IMR-90 (cell line): ENCODE measurements at regions of chr4 and their contacts with region 1.

Region 1: DNA sequence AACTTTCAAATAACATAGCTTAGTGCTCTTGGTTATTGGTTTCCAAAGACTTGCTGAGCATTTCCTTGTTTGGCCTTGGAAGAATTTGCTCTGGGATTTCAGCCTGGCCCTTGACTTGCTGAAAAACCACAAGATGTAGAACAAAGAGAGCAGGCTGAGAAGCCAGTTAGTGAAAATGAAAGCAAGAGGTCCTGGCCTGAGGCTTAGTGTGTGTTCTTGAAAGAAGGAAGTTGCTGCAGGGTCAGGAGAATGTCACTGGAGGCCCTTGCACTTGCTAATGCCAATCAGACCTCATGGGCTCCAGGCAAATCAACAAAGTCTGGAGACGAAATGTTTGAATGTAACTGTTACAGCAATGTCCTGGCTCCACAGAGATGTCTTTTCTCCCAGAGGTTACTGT is 79.4 kb downstream of the SYNPO2 start:
- DNase-seq: peak; percentile 87
- ATAC-seq: peak; percentile 75
- H3K4me3 ChIP-seq: no peak overlapping the region
- H3K27ac ChIP-seq: peak overlapping the region; percentile 90
- H3K4me1 ChIP-seq: peaks cover 16% of the 10 kb centered on the region
- H3K27me3 ChIP-seq: no peaks in the 10 kb centered on the region
- CTCF ChIP-seq: no peak
- POLR2A ChIP-seq: no peak
- RAD21 ChIP-seq: no peak

Region 2: DNA sequence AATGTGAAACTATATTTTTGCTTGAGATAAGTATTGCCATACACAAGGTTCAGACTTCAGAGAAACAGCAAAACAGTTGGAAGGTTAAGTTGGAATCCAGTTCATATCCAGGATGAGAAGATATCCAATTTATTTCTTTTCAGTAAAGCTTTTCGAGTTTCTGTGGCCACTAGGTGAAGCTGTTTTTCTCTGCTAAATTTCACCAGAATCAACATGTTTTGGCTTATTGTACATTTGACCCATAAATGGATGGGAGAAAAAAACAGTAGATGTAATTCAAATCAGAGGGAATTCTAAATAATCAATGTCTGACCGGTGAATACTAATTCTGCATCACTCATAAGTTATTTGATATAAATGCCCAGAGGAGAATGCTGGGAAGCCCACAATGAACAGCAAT is 291.9 kb before region 1 on chr4:
- CTCF ChIA-PET with region 1: no interaction called
- POLR2A ChIA-PET with region 1: no interaction called
- dilution Hi-C with region 1: no loop called
- in situ Hi-C with region 1: no loop called
- intact Hi-C with region 1: loop called (anchors 5 kb)
- DNase-seq: no peak
- ATAC-seq: no peak
- H3K4me3 ChIP-seq: no peak overlapping the region
- H3K27ac ChIP-seq: no peak overlapping the region
- H3K4me1 ChIP-seq: no peaks in the 10 kb centered on the region
- H3K27me3 ChIP-seq: no peaks in the 10 kb centered on the region; the same call in none of the 2 replicates
- CTCF ChIP-seq: 0 out of 2 replicates have a peak, but pooled peaks have one; percentile 15
- POLR2A ChIP-seq: no peak
- RAD21 ChIP-seq: no peak

Region 3: DNA sequence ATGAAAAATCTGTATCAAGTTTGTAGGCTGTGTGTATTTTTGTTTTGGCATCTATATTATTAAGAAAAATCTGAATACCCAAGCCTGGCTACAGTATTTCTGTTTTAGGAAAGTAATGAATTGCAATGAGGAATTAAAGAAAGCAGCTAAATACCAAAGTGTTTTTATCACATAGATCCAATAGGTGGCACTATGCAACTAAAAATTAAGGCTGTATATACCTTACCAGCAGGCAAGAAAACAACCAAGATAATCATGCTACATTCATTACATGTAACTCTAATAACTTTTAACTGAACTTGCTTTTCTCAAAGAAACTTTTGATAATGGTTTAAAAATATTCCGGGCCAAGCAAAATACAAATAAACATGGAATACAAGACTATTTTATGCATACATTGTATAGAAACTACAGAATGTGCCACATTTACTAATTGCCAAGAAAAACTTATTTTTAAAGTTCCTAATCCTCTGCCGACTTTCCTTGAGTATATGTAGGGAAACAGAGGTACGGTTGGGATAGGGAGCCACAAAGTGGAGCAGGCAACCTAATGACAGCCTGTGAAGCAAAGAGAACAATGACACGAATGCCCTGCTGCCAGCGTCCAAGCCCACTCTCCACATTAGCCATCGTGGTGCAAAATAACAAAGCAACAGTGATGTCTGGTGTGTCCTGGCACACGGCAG is 195.8 kb before region 1 on chr4:
- CTCF ChIA-PET with region 1: interaction called, 3 read pairs
- POLR2A ChIA-PET with region 1: no interaction called
- dilution Hi-C with region 1: no loop called
- in situ Hi-C with region 1: no loop called
- intact Hi-C with region 1: loop called (anchors 1 kb)
- DNase-seq: peak; percentile 70
- ATAC-seq: peak; percentile 60
- H3K4me3 ChIP-seq: no peak overlapping the region
- H3K27ac ChIP-seq: peak overlapping the region; percentile 50; the same call in 1 of the 2 replicates
- H3K4me1 ChIP-seq: peaks cover 12% of the 10 kb centered on the region
- H3K27me3 ChIP-seq: no peaks in the 10 kb centered on the region
- CTCF ChIP-seq: peak; percentile 61
- POLR2A ChIP-seq: no peak
- RAD21 ChIP-seq: peak; percentile 62

Region 4: GRCh38 chr4:118888666-118889311 is 79.2 kb before region 1 on chr4 and contains the start of gene SYNPO2:
- CTCF ChIA-PET with region 1: no interaction called
- POLR2A ChIA-PET with region 1: interaction called, 3 read pairs
- dilution Hi-C with region 1: no loop called
- in situ Hi-C with region 1: no loop called
- intact Hi-C with region 1: loop called (anchors 1 kb)
- DNase-seq: peak; percentile 87
- ATAC-seq: peak; percentile 95
- H3K4me3 ChIP-seq: peak within 1 kb of the TSS; percentile 52
- H3K27ac ChIP-seq: peak within 1 kb of the TSS; percentile 31; the same call in 1 of the 2 replicates
- H3K4me1 ChIP-seq: peaks cover 5% of the 10 kb centered on the region
- H3K27me3 ChIP-seq: no peaks in the 10 kb centered on the region
- CTCF ChIP-seq: no peak
- POLR2A ChIP-seq: peak; percentile 52; the same call in 1 of the 2 replicates
- RAD21 ChIP-seq: peak; percentile 29
- total RNA-seq, gene SYNPO2: 1.7 and 1.8 TPM in 2 replicates

Region 5: DNA sequence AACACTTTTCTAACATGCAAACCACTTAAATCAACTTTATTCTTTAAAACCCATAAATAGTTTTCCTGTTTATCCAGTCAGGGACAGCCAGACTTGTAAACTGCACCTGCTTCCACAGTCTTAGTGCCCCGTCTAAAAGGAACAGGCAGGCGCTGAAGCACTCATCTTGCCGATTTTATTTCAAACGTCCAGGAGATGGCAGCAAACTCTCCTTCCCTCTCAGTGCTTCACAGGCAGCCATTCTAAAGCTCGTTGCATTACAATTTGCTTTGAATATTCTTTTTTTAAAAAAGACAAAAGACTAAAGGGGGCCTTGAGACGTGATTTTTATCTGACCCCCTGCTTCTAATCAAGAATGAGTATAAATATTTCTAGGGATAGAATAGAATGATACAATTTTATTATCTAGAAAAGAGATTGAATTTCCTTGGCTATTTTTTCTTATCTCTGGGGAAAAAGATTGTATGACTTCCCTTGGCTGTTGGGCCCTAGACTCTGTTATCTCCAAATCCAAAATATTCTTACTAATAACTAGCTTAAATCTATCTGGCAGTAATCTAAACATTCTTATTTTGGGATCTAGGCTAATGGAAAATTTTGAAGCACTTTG is 74.1 kb after region 1 on chr4:
- CTCF ChIA-PET with region 1: no interaction called
- POLR2A ChIA-PET with region 1: no interaction called
- dilution Hi-C with region 1: no loop called
- in situ Hi-C with region 1: no loop called
- intact Hi-C with region 1: no loop called
- DNase-seq: peak; percentile 83
- ATAC-seq: peak; percentile 63
- H3K4me3 ChIP-seq: no peak overlapping the region
- H3K27ac ChIP-seq: peak overlapping the region; percentile 100; the same call in 1 of the 2 replicates
- H3K4me1 ChIP-seq: peaks cover 12% of the 10 kb centered on the region
- H3K27me3 ChIP-seq: no peaks in the 10 kb centered on the region
- CTCF ChIP-seq: peak; percentile 77
- POLR2A ChIP-seq: no peak
- RAD21 ChIP-seq: peak; percentile 83